Activated CD4-positive, alpha-beta T cell treated with anti-CD3 and anti-CD28 coated beads, Interleukin-2, amount 10 ng/mL, durations not matched to agents 24 days and 14 days (primary cell): ENCODE measurements at regions of chr10 and their contacts with region 1.

Region 1: GRCh38 chr10:74826142-74827044 is at the start of gene KAT6B:
- DNase-seq: peak; percentile 100
- H3K4me3 Mint-ChIP-seq: peak within 1 kb of the TSS; percentile 87
- H3K27ac Mint-ChIP-seq: peak within 1 kb of the TSS; percentile 94
- H3K4me1 Mint-ChIP-seq: peaks cover 46% of the 10 kb centered on the region
- H3K27me3 Mint-ChIP-seq: no peaks in the 10 kb centered on the region
- total RNA-seq, gene KAT6B: 21.2 and 21.7 TPM in 2 replicates

Region 2: GRCh38 chr10:74262856-74263255 is 563.5 kb before region 1 on chr10:
- intact Hi-C with region 1: loop called (anchors 2 kb)
- DNase-seq: no peak
- H3K4me3 Mint-ChIP-seq: no peak overlapping the region
- H3K27ac Mint-ChIP-seq: peak overlapping the region; percentile 29
- H3K4me1 Mint-ChIP-seq: peaks cover 15% of the 10 kb centered on the region
- H3K27me3 Mint-ChIP-seq: no peaks in the 10 kb centered on the region

Region 3: GRCh38 chr10:74502963-74503608 is 323.3 kb before region 1 on chr10:
- intact Hi-C with region 1: loop called (anchors 10 kb)
- DNase-seq: no peak
- H3K4me3 Mint-ChIP-seq: peak overlapping the region; percentile 19
- H3K27ac Mint-ChIP-seq: peak overlapping the region; percentile 83
- H3K4me1 Mint-ChIP-seq: peaks cover 31% of the 10 kb centered on the region
- H3K27me3 Mint-ChIP-seq: no peaks in the 10 kb centered on the region

Region 4: DNA sequence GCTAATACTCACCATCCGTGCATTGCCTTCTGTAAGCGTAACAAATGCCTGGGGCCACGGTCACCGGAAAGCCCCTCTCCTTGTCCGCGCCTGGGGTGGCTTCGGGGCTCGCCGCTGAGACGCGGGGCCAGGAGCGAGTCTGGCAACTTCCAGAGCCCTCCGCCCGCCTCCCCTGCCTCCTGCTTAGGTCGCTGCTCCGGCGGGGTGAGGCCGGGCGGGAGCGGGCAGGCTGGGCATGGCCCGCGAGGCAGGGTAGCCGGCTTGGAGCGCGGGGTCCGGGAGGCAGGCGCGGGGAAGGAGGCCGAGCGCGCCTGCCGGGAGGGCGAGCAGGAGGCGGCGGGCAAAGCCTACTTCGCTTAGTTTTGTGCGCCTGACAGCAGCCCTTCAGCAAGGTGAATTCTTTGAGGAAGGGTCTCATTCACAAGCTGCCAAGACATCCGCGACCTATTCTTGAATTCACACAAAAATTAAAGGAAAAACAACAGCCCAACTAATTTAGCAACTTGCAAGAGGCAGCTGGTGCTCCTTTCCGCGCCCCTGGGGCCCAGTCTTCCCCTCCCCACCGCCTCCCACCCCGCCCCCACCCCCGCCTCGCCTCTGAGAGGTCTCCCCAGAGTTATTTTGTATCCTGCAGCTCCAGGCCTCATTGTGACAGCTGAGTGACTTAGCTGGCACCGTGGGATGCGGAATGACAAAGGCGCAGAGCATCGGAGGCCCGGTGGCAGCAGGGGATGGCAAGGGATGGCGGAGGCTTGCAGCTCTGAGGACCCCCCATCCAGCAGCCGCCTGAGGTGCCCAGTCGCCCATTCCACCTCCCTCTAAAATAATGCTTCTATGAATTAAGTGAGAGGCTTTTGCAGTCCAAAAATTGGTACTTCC is 12.8 kb before region 1 on chr10:
- intact Hi-C with region 1: no loop called
- DNase-seq: no peak
- H3K4me3 Mint-ChIP-seq: no peak overlapping the region
- H3K27ac Mint-ChIP-seq: no peak overlapping the region
- H3K4me1 Mint-ChIP-seq: no peaks in the 10 kb centered on the region
- H3K27me3 Mint-ChIP-seq: no peaks in the 10 kb centered on the region

Region 5: DNA sequence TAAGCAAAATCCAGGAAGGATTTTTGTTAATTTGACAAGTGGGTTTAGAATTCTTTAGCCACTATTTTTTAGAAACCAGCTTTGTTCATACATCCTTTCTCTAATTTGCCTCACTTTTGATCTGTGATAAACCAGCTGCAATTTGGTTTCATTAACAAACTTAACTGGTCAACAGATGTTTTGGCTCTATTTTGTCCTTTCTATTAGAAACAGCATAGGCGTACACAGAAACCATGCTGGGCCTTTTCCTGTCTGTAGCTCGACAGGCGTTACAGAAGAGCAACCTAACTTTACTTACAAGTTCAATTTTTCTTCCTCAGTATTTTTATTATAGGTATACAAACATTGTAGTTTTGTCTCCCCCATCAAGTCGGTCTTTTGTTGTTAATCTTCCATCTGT is 28.2 kb after region 1 on chr10:
- intact Hi-C with region 1: loop called (anchors 1 kb)
- DNase-seq: no peak
- H3K4me3 Mint-ChIP-seq: peak overlapping the region; percentile 52
- H3K27ac Mint-ChIP-seq: peak overlapping the region; percentile 76
- H3K4me1 Mint-ChIP-seq: peaks cover 21% of the 10 kb centered on the region
- H3K27me3 Mint-ChIP-seq: no peaks in the 10 kb centered on the region

Region 6: GRCh38 chr10:74871595-74872382 is 45.4 kb after region 1 on chr10:
- intact Hi-C with region 1: no loop called
- DNase-seq: peak; percentile 70
- H3K4me3 Mint-ChIP-seq: peak overlapping the region; percentile 72
- H3K27ac Mint-ChIP-seq: peak overlapping the region; percentile 82
- H3K4me1 Mint-ChIP-seq: peaks cover 30% of the 10 kb centered on the region
- H3K27me3 Mint-ChIP-seq: no peaks in the 10 kb centered on the region

Region 7: GRCh38 chr10:74977913-74978847 is 151.8 kb after region 1 on chr10:
- intact Hi-C with region 1: loop called (anchors 2 kb)
- DNase-seq: peak; percentile 91
- H3K4me3 Mint-ChIP-seq: peak overlapping the region; percentile 71
- H3K27ac Mint-ChIP-seq: peak overlapping the region; percentile 91
- H3K4me1 Mint-ChIP-seq: peaks cover 47% of the 10 kb centered on the region
- H3K27me3 Mint-ChIP-seq: no peaks in the 10 kb centered on the region

Region 8: DNA sequence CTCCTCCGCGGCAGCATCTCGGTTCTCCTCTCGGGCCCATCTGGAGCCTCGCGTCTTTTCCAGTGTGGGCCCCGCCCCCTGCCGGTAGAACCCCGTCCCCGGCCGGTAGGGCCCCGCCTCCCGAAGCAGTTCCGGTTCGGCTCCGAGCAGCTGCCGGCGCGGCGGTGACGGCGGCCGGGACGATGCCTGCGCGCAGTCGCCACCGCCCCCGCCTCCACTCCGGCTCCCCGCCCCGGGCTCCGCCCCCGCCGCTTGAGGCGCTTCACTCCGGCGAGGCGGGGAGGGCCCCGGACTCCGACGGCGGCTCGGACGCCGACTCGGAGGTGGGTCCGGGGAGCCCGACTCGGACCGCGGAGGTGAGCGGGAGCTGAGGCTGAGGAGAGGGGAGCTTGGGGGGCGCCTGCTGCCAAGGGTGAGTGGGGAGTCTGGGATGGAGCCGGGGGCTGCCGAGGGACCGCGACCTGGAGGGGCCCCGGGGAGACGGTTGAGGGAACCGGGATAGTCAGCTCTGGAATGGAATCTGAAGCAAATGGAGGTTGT is 285.0 kb after region 1 on chr10 and contains the start of gene SAMD8:
- intact Hi-C with region 1: loop called (anchors 1 kb)
- DNase-seq: peak; percentile 99
- H3K4me3 Mint-ChIP-seq: peak within 1 kb of the TSS; percentile 91
- H3K27ac Mint-ChIP-seq: peak within 1 kb of the TSS; percentile 98
- H3K4me1 Mint-ChIP-seq: peaks cover 33% of the 10 kb centered on the region
- H3K27me3 Mint-ChIP-seq: no peaks in the 10 kb centered on the region
- total RNA-seq, gene SAMD8: 17.7 and 17.9 TPM in 2 replicates